Caco-2 (cell line): ENCODE measurements at regions of chr6 and their contacts with region 1.

Region 1: DNA sequence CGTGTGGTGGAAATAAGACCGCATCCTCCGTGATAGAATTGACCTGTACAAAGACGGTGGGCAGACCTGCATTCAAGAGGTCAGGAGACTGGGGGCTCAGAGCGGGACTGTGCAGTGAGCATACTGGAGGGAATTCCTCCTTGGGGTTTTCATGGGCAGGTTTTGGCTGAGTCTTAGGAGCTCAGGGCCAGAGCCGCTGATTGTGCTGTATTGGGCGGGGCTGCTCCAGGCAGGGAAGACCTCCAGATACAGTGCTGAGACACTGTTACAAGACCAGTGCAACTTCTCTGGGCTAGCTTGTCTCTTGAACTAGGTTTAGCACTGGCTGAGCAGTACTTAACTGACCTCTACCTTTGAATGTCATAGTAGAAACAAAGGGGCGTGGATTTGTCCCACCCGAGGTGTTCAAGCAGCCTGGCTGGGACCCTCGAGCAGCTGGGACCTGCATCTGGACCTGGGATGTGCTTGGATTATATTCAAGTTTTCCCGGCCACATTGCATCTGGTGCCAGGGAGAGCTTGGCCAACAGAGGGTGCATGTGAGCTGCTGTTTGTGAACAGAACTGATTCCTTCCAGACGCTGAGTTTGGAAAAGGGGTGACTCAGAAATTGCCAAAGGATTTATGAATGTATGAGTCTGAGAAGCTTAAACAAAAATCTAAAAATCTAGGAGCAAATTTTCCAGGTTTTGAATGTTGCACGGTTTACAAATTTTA is 33.4 kb upstream of the SLC22A1 start:
- DNase-seq: peak in 1 of 2 experiments; percentile 47
- H3K4me3 ChIP-seq: no peak overlapping the region
- H3K4me3 Mint-ChIP-seq: no peak overlapping the region
- H3K27ac Mint-ChIP-seq: no peak overlapping the region
- H3K4me1 ChIP-seq: no peaks in the 10 kb centered on the region
- H3K4me1 Mint-ChIP-seq: no peaks in the 10 kb centered on the region
- H3K27me3 ChIP-seq: no peaks in the 10 kb centered on the region
- H3K27me3 Mint-ChIP-seq: no peaks in the 10 kb centered on the region
- CTCF ChIP-seq: peak; percentile 51 to 84

Region 2: DNA sequence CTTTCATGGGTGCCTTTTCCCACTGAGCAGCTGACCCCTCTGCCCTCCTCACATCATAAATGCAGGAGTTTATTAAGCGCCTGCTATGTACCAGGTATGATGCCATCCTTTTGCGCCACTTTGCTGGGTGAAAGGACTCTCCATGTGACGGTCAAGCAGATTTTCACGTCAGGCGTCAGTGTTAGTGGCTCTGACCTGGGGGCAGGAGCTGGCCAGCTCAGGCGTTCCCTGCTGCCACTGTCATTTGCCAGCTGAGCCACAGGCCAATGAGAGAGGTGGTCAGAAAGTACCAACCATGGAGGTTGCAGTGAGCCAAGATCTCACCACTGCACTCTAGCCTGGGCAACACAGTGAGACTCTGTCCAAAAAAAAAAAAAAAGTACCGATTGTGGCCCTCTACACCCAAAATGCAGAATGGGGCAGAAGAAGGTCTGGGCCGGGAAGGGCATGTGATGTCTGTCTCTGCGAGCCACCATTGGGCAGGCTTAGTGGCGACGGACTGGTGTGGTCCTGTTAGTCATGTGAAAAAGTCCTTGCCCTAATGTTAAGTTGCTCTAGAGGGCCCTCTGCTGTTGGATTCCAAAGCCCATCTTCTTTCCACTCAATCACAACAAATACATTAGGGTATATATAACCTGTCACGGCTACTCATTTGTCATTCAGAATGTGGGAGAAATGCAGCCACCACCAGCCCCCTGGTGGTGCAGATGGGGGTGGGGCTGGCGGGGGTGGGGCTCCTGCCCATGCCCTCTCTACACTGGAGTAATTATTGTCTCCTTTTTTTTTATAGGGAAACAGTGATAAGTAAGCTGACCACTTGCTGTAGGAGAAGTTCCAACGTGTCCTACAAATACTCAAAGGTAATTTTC is 15.0 kb after region 1 on chr6:
- CTCF ChIA-PET with region 1: no interaction called
- POLR2A ChIA-PET with region 1: no interaction called
- intact Hi-C with region 1: loop called (anchors 1 kb)
- DNase-seq: peak in 1 of 2 experiments; percentile 28
- H3K4me3 ChIP-seq: no peak overlapping the region
- H3K4me3 Mint-ChIP-seq: no peak overlapping the region
- H3K27ac Mint-ChIP-seq: no peak overlapping the region
- H3K4me1 ChIP-seq: no peaks in the 10 kb centered on the region
- H3K4me1 Mint-ChIP-seq: no peaks in the 10 kb centered on the region
- H3K27me3 ChIP-seq: no peaks in the 10 kb centered on the region
- H3K27me3 Mint-ChIP-seq: no peaks in the 10 kb centered on the region
- CTCF ChIP-seq: peak; percentile 12 to 36

Region 3: DNA sequence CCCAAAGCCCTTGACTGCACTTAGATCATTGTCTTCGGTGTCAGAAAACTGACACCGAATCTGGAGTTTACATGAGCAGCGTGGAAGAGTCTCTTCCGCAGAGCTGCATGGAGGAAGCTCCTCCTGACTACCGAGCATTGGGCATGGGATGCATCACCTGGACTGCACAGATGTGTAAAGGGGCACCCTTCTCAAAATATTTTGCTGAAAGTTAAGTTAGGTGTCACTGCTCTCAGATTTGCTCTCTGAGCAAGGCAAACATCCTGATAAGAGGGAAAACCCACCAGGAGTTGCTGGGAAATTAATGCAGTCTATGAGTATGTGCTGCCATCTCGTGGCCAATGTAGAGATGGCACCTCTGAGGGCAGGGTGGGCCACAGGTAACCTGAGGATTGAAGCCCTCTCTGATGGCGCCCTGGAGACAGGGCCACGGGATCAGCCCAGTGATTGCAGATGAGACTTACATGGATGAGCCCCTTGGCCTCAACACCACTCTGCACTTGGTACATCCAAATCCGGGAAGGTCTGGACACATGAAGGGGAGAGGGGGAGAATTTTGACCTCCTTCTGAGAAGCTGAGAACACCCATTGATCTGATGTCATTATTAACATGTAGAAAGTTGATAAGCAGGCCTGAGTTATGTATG is 445.9 kb after region 1 on chr6:
- CTCF ChIA-PET with region 1: interaction called, 3 read pairs
- POLR2A ChIA-PET with region 1: no interaction called
- intact Hi-C with region 1: loop called (anchors 5 kb)
- DNase-seq: peak; percentile 35 to 67
- H3K4me3 ChIP-seq: no peak overlapping the region
- H3K4me3 Mint-ChIP-seq: no peak overlapping the region
- H3K27ac Mint-ChIP-seq: no peak overlapping the region
- H3K4me1 ChIP-seq: no peaks in the 10 kb centered on the region
- H3K4me1 Mint-ChIP-seq: no peaks in the 10 kb centered on the region
- H3K27me3 ChIP-seq: no peaks in the 10 kb centered on the region
- H3K27me3 Mint-ChIP-seq: no peaks in the 10 kb centered on the region
- CTCF ChIP-seq: peak; percentile 88 to 89